ENCODE measurements at regions of chr18 and their contacts with region 1.

Region 1: GRCh38 chr18:49858309-49859020 is 45.1 kb upstream of the ACAA2 start:
- DNase-seq: peak; percentile 74 to 83 (median 77)
- ATAC-seq: peak; percentile 89
- H3K4me3 ChIP-seq: no peak overlapping the region
- H3K4me1 ChIP-seq: peaks cover 27% of the 10 kb centered on the region
- CTCF ChIP-seq: peak; percentile 81

Region 2: GRCh38 chr18:49510393-49511115 is 347.9 kb before region 1 on chr18:
- intact Hi-C with region 1: loop called in 1 of 2 experiments (anchors 2 kb)
- DNase-seq: peak in 2 of 3 donors; percentile 64 to 73
- ATAC-seq: peak; percentile 68
- H3K4me3 ChIP-seq: no peak overlapping the region
- H3K4me1 ChIP-seq: no peaks in the 10 kb centered on the region
- CTCF ChIP-seq: peak; percentile 58

Region 3: DNA sequence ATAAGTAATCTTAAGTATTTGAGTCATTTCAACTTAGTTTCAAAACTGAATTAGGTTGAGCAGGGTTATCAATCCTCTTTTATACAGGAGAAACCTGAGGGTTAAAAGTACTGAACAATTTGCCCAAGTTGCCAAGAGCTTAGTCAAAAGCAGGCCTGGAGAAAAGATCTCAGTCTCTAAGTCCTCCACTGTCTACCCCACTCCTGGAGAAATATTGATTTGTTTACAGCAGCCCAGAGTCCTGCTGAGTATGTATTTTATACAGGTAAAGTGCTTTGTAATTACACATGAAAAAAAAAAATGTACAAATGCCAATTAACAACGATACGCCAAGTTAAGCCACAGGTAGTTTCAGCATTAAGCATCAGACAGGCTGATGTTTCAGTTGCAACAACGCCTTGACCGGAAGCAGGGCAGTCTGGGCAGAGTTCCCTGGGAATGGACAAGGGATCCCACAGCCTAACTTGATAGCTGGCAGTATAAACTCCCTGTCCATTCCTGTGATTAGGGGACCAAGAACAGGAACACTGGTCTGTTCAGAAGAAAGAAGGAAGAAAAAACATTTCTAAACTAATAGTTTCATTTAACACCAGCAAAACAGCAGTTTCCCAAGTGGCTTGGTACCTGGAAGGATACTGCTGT is 203.5 kb after region 1 on chr18:
- intact Hi-C with region 1: no loop called
- DNase-seq: no peak
- ATAC-seq: no peak
- H3K4me3 ChIP-seq: no peak overlapping the region
- H3K4me1 ChIP-seq: peaks cover 23% of the 10 kb centered on the region
- CTCF ChIP-seq: no peak